CD4-positive, alpha-beta T cell (primary cell): ENCODE measurements at regions of chr9 and their contacts with region 1.

Region 1: DNA sequence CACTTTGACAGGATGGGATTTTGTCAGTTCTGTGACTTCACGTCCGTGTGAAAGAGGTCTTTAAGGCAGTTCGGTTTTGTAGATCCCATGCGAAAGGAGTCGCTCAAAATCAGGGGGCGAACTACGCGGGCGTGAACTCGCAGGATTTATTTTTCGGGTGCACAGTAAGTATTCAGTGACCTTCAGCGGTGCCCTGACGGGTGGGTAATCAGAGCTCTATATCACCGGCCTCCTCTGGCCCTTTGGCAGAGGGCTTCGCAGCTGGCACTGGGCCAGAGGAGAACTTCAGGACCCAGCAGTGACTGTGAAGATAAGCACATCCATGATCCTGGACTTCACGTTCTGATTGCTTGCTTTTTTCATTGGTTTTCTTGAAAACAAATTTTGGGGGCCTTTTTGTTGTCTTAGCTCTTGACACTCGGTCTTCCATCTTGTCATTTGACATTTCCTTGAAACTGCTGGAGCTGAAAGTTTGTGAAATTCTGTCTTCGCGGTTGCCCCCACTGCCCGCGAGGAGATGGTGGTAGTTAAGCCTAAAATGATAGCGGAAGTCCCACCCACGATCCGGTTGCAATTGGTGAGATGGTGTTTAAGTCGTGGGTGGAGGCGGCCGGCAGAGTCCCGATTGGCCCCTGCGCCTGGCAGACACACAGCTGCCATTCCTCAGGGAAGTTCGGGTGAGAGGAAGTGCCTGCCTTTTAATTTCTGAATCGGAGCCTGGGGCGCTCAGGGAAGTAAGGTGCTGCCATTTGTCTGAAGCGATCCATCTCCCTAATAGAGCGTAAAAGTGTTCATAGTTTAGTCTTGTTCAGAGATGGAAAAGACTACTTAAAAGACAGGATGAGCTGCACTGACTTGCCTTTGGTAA is at the start of gene FAM120AOS:
- DNase-seq: peak; percentile 65 to 93 (median 76)
- ATAC-seq: peak; percentile 71
- H3K4me3 ChIP-seq: peak within 1 kb of the TSS; percentile 90
- H3K4me3 Mint-ChIP-seq: peak within 1 kb of the TSS; percentile 98
- H3K27ac ChIP-seq: peak within 1 kb of the TSS; percentile 67 to 81
- H3K27ac Mint-ChIP-seq: peak within 1 kb of the TSS; percentile 94
- H3K4me1 ChIP-seq: peaks cover 29% of the 10 kb centered on the region
- H3K4me1 Mint-ChIP-seq: peaks cover 64% of the 10 kb centered on the region
- H3K27me3 ChIP-seq: no peaks in the 10 kb centered on the region
- H3K27me3 Mint-ChIP-seq: no peaks in the 10 kb centered on the region
- CTCF ChIP-seq: no peak
- total RNA-seq, gene FAM120AOS: 45.6 to 50.3 TPM

Region 2: DNA sequence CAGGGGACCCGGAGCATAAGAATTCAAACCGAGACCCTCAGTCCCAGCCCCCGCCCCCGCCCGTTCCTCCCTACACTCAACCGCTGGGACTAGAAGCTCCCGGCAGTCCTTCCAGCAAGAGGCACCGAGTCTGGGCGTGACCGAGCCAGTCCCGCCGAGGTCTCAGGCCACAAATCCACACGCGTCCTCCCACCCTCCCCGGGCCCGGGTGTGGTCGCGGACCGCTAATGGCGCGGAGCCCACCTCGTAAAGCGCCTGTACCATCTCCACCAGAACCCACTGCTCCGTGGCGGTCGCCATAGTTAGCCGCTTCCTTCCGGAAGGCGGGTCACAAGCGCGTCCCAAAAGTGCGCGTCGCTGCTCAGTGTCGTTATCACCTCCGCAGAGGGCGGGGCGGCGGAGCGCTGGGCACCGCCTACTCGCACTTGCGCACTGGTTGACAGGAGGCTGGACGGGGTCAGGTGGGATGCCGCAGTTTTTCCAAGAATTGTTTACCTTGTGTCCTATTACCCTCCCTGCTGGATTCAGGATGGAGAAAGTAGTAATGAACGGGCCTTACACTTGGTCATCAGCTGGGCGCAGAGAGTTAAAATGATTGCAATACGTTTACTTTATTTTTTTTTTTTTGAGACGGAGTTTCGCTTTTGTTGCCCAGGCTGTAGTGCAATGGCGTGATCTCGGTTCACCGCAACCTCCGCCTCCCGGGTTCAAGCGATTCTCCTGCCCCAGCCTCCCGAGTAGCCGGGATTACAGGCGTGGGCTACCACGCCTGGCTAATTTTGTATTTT is 1338.0 kb before region 1 on chr9 and contains the start of gene SPTLC1:
- CTCF ChIA-PET with region 1: no interaction called
- POLR2A ChIA-PET with region 1: no interaction called
- intact Hi-C with region 1: loop called in 1 of 2 experiments (anchors 10 kb)
- DNase-seq: peak; percentile 90 to 98 (median 92)
- ATAC-seq: peak; percentile 94
- H3K4me3 ChIP-seq: peak within 1 kb of the TSS; percentile 71
- H3K4me3 Mint-ChIP-seq: peak within 1 kb of the TSS; percentile 94
- H3K27ac ChIP-seq: peak within 1 kb of the TSS; percentile 84 to 89
- H3K27ac Mint-ChIP-seq: peak within 1 kb of the TSS; percentile 97
- H3K4me1 ChIP-seq: peaks cover 9% of the 10 kb centered on the region
- H3K4me1 Mint-ChIP-seq: peaks cover 47% of the 10 kb centered on the region
- H3K27me3 ChIP-seq: no peaks in the 10 kb centered on the region
- H3K27me3 Mint-ChIP-seq: no peaks in the 10 kb centered on the region
- CTCF ChIP-seq: no peak
- total RNA-seq, gene SPTLC1: 40.9 to 43.0 TPM

Region 3: DNA sequence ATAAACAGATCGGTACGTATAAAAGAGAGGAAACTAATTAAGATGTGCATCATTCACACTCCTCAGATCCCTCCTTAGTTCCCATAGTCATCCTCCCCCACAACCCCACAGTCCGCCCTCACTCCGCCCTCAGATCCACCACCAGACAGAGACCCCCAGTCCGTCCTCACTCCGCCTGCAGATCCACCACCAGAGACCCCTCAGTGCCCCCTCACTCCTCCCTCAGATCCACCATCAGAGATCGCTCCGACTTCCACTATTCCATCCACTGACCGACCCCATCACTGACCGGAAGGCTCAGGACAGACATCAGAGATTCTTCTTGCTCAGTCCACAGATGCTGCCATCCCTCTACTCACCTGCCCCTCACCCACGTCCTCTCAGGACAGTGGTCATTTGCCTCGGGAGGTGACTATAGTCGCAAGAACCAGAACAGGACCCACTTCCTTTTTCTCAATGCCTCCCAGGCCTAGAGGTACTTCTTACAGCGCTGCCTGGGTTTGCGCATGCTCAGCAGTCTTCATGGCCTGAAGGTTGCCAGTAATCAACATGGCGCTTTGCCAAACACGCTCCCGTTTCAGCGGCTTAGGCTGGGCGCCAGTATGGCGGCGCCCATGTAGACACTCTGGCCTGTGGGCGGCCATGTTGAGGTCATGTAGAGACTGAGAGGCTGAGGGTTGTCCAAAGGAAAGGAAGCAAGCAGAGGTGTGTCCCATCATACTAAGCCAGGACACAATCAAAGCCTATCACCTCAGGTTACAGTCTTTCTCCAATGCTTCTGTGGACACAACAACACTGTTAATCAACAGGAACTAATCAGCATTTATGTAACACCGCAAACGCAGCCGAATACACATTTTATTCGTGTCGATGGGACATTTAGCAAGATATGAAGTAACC is 575.5 kb before region 1 on chr9 and contains the start of gene ZNF484:
- CTCF ChIA-PET with region 1: no interaction called
- POLR2A ChIA-PET with region 1: no interaction called
- intact Hi-C with region 1: loop called in 1 of 2 experiments (anchors 10 kb)
- DNase-seq: peak; percentile 94 to 100 (median 98)
- ATAC-seq: peak; percentile 96
- H3K4me3 ChIP-seq: peak within 1 kb of the TSS; percentile 72
- H3K4me3 Mint-ChIP-seq: peak within 1 kb of the TSS; percentile 98
- H3K27ac ChIP-seq: peak within 1 kb of the TSS; percentile 61 to 78
- H3K27ac Mint-ChIP-seq: peak within 1 kb of the TSS; percentile 96
- H3K4me1 ChIP-seq: peaks cover 8% of the 10 kb centered on the region
- H3K4me1 Mint-ChIP-seq: peaks cover 61% of the 10 kb centered on the region
- H3K27me3 ChIP-seq: no peaks in the 10 kb centered on the region
- H3K27me3 Mint-ChIP-seq: no peaks in the 10 kb centered on the region
- CTCF ChIP-seq: no peak
- total RNA-seq, gene ZNF484: 13.3 to 13.6 TPM

Region 4: DNA sequence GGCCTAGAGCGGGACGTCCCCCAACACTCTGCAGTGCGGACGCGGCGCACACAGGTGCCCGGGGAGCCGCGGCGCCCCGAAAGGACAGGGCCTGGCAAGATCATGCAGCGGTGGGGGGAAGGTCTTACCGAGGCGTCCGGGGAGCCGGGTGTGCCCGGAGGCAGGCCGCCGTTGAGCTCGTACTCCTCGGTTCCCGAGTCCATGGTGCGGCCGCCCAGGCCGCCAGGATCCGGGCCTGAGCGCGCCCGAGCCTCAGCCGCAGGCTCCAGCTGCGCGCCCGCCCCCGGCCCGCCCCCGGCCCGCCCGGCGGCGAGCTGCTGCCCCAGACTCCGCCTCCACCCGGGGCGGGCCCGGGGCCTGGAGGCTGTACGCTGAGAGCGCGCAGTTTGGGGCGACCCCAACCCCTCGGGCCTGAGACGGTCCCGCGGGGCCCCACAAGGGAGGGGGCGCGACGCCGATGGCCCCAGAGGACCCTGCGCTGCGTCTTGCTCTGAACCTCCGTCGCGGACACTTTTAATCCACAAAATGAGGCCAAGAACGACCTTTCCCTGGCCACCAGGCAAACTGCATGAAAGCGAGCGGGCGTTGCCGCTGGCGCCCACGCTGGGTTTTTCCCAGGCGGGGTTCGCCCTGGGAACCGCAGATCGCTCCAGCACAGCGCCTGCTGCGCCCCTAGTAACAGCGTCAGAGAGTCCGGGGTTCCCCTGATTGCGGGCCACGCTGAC is 319.1 kb before region 1 on chr9 and contains the start of gene NINJ1:
- CTCF ChIA-PET with region 1: no interaction called
- POLR2A ChIA-PET with region 1: interaction called, 3 read pairs
- intact Hi-C with region 1: loop called in 1 of 2 experiments (anchors 10 kb)
- DNase-seq: peak; percentile 40 to 98 (median 73)
- ATAC-seq: peak; percentile 83
- H3K4me3 ChIP-seq: peak within 1 kb of the TSS; percentile 86
- H3K4me3 Mint-ChIP-seq: peak within 1 kb of the TSS; percentile 96
- H3K27ac ChIP-seq: peak within 1 kb of the TSS; percentile 91 to 96
- H3K27ac Mint-ChIP-seq: peak within 1 kb of the TSS; percentile 94
- H3K4me1 ChIP-seq: peaks cover 79% of the 10 kb centered on the region
- H3K4me1 Mint-ChIP-seq: peaks cover 77% of the 10 kb centered on the region
- H3K27me3 ChIP-seq: no peaks in the 10 kb centered on the region
- H3K27me3 Mint-ChIP-seq: no peaks in the 10 kb centered on the region
- CTCF ChIP-seq: no peak
- total RNA-seq, gene NINJ1: 87.8 to 87.9 TPM

Region 5: DNA sequence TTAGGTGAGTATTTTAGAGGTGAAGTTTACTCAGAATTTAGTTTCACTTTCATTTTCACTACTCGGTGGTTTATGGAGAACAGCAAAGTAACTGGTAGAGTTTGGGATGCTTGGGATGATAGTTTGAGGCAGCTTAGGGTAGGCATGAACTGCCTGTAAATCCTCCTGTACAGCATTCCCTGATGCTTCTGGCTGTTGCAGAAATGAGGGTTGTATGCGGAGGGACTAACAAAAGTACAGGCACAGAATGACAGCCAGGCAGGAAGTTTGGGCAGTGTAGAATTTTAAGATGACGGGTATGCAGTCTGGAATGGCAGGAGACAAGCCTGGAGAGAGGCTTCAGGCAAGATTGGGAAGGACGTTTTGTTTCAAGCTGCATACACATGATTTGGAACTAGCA is 48.1 kb after region 1 on chr9:
- CTCF ChIA-PET with region 1: no interaction called
- POLR2A ChIA-PET with region 1: no interaction called
- intact Hi-C with region 1: loop called (anchors 5 kb)
- DNase-seq: peak in 3 of 14 experiments; percentile 26 to 60 (median 36)
- ATAC-seq: peak; percentile 55
- H3K4me3 ChIP-seq: peak overlapping the region; percentile 56
- H3K4me3 Mint-ChIP-seq: peak overlapping the region; percentile 87
- H3K27ac ChIP-seq: peak overlapping the region in 1 of 2 donors; percentile 61
- H3K27ac Mint-ChIP-seq: peak overlapping the region; percentile 85
- H3K4me1 ChIP-seq: peaks cover 27% of the 10 kb centered on the region
- H3K4me1 Mint-ChIP-seq: peaks cover 65% of the 10 kb centered on the region
- H3K27me3 ChIP-seq: no peaks in the 10 kb centered on the region
- H3K27me3 Mint-ChIP-seq: no peaks in the 10 kb centered on the region
- CTCF ChIP-seq: no peak

Region 6: GRCh38 chr9:93665637-93666438 is 212.6 kb after region 1 on chr9:
- CTCF ChIA-PET with region 1: no interaction called
- POLR2A ChIA-PET with region 1: no interaction called
- intact Hi-C with region 1: no loop called
- DNase-seq: peak in 2 of 14 experiments; percentile 1 to 32
- ATAC-seq: no peak
- H3K4me3 ChIP-seq: no peak overlapping the region
- H3K4me3 Mint-ChIP-seq: no peak overlapping the region
- H3K27ac ChIP-seq: no peak overlapping the region
- H3K27ac Mint-ChIP-seq: no peak overlapping the region
- H3K4me1 ChIP-seq: no peaks in the 10 kb centered on the region
- H3K4me1 Mint-ChIP-seq: no peaks in the 10 kb centered on the region
- H3K27me3 ChIP-seq: no peaks in the 10 kb centered on the region
- H3K27me3 Mint-ChIP-seq: no peaks in the 10 kb centered on the region
- CTCF ChIP-seq: no peak